ENCODE measurements at regions of chr14 and their contacts with region 1.

Region 1: GRCh38 chr14:76904740-76905438 is 78.7 kb downstream of the LRRC74A start:
- DNase-seq: peak; percentile 92
- H3K4me3 ChIP-seq: peak overlapping the region; percentile 42
- H3K27ac ChIP-seq: peak overlapping the region; percentile 99
- H3K27me3 ChIP-seq: no peaks in the 10 kb centered on the region
- CTCF ChIP-seq: no peak

Region 2: DNA sequence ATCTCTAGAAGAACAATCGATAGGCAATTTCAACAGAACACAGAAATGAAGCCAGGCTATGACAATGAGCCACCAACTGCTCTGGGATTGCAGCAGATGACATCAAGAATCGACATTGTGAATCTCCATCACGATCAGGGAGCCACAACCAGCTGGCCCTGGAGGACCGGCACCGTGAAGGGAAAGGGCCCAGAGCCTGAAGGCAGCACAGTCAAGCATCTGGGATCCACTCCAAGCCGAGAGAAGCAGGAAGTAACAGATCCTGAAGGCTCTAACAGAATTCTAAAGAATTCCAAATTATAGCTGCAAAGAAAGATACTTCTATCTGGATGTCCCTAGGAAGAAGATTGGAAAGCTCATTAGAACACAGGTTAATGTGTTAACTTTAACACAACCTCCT is 17.7 kb before region 1 on chr14:
- CTCF ChIA-PET with region 1: no interaction called
- POLR2A ChIA-PET with region 1: interaction called, 12 read pairs
- DNase-seq: no peak
- H3K4me3 ChIP-seq: no peak overlapping the region
- H3K27ac ChIP-seq: no peak overlapping the region
- H3K27me3 ChIP-seq: peaks cover 7% of the 10 kb centered on the region
- CTCF ChIP-seq: no peak

Region 3: DNA sequence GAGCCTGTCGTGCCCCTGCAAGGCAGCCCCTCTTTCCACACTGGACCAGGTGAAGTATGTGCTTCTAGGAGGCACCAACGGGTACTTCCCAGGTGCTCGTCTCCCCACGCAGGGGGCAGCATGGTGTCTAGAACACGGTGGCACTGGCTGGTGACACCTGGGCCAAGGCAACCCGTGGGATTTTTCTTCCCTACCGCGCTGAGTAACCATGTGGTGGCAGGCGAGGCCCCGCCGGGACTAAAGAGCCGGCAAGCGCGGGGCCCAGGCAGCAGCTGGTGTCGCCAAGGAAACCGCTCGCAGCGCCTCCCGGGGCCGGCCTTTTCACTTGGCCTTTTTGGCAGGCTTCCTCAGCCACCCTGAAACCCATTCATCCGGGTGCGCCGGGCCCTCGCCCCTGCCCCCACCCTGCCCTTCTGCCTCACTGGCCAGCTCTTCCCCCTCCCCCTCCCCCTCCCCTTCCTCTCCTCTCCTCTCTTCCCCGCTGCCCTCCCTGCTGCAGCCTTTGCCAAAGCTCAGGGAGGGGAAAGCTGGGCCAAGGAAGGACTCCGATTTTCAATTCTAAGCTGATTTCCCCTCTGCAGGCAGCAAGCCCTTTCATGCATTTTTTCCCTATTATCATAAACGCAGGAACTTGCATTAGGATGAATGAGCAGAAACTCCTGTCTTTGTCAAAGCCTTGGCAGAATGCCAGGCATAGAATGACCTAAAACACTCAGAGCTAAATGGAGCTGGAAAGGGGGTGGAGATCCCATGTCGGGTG is 42.4 kb after region 1 on chr14:
- CTCF ChIA-PET with region 1: interaction called, 3 read pairs
- POLR2A ChIA-PET with region 1: interaction called, 11 read pairs
- DNase-seq: peak; percentile 61
- H3K4me3 ChIP-seq: peak overlapping the region; percentile 22; the same call in 1 of the 2 replicates
- H3K27ac ChIP-seq: peak overlapping the region; percentile 93
- H3K27me3 ChIP-seq: no peaks in the 10 kb centered on the region
- CTCF ChIP-seq: peak; percentile 35; the same call in 1 of the 2 replicates

Region 4: GRCh38 chr14:77040059-77040740 is 135.3 kb after region 1 on chr14:
- CTCF ChIA-PET with region 1: no interaction called
- POLR2A ChIA-PET with region 1: interaction called, 14 read pairs
- DNase-seq: peak; percentile 97
- H3K4me3 ChIP-seq: peak overlapping the region; percentile 51
- H3K27ac ChIP-seq: peak overlapping the region; percentile 99
- H3K27me3 ChIP-seq: no peaks in the 10 kb centered on the region
- CTCF ChIP-seq: no peak